Transverse colon (tissue), 4 donors: ENCODE measurements at regions of chr2 and their contacts with region 1.

Region 1: GRCh38 chr2:237413777-237414661 is at the start of gene COL6A3:
- DNase-seq: peak; percentile 43
- H3K4me3 ChIP-seq: peak within 1 kb of the TSS; percentile 16 to 59 (median 38)
- H3K27ac ChIP-seq: peak within 1 kb of the TSS; percentile 86 to 95 (median 88)
- H3K4me1 ChIP-seq: peaks cover 0 to 5% (median 0%) of the 10 kb centered on the region in 4 donors
- H3K27me3 ChIP-seq: peaks cover 11% of the 10 kb centered on the region
- CTCF ChIP-seq: no peak
- EP300 ChIP-seq: no peak
- POLR2A ChIP-seq: peak; percentile 39
- total RNA-seq, gene COL6A3: 68.1 to 261 (median 75.6) TPM

Region 2: GRCh38 chr2:237171396-237171795 is 242.6 kb before region 1 on chr2:
- in situ Hi-C with region 1: loop called in 2 of 4 experiments (anchors 25 kb)
- intact Hi-C with region 1: loop called (anchors 5 kb)
- DNase-seq: no peak
- H3K4me3 ChIP-seq: no peak overlapping the region
- H3K27ac ChIP-seq: peak overlapping the region; percentile 49 to 70 (median 62)
- H3K4me1 ChIP-seq: peaks cover 0 to 12% (median 5%) of the 10 kb centered on the region in 4 donors
- H3K27me3 ChIP-seq: peaks cover 3% of the 10 kb centered on the region
- CTCF ChIP-seq: peak in 1 of 5 experiments; percentile 3
- EP300 ChIP-seq: no peak
- POLR2A ChIP-seq: no peak

Region 3: DNA sequence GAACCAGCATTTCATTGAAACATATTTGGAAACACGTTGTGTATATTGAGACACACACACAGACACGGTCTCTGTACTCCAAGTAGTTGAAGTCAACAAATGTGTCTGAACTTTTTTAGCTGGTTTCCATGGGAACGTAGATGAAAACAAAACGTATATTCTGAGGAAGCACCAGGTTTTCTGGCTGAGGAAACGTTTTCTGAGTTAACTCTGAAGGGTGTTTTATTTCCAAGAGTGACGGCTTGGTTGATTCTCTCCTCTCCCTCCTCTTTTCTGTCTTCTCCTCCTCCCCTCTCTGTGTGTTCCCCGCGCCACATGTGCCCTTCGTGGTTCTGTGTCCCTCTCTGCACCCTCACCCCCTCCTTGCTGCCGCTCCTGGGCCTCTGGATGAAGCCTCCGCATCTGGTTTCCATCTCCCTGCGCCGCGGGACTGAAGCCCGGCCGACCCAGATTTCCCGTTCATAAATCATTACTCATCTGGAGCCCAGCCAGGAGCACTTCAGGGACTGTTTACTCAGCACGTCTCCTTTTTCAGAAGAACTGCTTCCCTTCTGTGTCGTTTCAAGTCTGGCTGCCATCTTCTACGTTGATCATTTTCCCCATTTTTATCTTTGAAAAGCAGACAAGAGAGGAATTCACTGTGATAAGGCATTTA is 122.8 kb before region 1 on chr2:
- in situ Hi-C with region 1: no loop called
- intact Hi-C with region 1: loop called (anchors 10 kb)
- DNase-seq: peak; percentile 87
- H3K4me3 ChIP-seq: no peak overlapping the region
- H3K27ac ChIP-seq: peak overlapping the region; percentile 78 to 87 (median 83)
- H3K4me1 ChIP-seq: peaks cover 18 to 29% (median 22%) of the 10 kb centered on the region in 4 donors
- H3K27me3 ChIP-seq: peaks cover 6% of the 10 kb centered on the region
- CTCF ChIP-seq: no peak
- EP300 ChIP-seq: peak; percentile 83
- POLR2A ChIP-seq: no peak